Motor neuron (in vitro differentiated cells): ENCODE measurements at regions of chr16 and their contacts with region 1.

Region 1: GRCh38 chr16:58582971-58583765 is 46.5 kb downstream of the CNOT1 start:
- ATAC-seq: no peak
- H3K4me3 ChIP-seq: no peak overlapping the region
- H3K27ac ChIP-seq: no peak overlapping the region
- H3K4me1 ChIP-seq: no peaks in the 10 kb centered on the region

Region 2: DNA sequence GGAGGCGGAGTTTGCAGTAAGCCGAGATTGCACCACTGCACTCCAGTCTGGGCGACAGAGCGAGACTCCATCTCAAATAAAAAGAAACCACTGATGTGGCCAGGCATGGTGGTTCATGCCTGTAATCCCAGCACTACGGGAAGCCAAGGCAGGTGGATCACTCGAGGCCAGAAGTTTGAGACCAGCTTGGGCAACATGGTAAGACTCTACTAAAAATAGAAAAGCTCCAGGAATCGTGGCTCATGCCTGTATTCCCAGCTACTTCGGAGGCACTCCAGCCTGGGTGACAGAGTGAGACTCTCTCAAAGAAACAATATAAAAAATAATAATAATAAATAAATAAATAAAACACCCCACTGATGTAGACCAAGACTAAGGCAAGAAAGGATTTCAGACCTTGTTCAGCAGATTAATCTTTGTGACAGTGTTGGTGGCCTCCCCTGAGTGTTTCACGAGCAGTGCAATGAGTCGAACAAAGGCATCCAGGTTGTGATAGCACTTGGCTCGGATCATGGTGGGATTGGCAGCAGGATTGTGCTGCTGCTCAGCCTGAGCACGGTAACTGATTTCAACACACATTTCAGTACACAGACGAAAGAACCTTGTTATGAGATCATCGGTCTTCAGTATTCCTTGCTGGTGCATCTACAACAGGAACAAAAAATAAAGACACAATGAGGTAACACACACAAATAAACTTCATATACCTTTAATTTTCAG is 49.3 kb before region 1 on chr16:
- in situ Hi-C with region 1: loop called in 1 of 9 experiments (anchors 10 kb)
- ATAC-seq: no peak
- H3K4me3 ChIP-seq: no peak overlapping the region
- H3K27ac ChIP-seq: no peak overlapping the region
- H3K4me1 ChIP-seq: no peaks in the 10 kb centered on the region

Region 3: GRCh38 chr16:58814348-58814801 is 231.2 kb after region 1 on chr16:
- in situ Hi-C with region 1: no loop called
- ATAC-seq: peak; percentile 78 to 91 (median 86)
- H3K4me3 ChIP-seq: peak overlapping the region; percentile 12 to 31 (median 26)
- H3K27ac ChIP-seq: peak overlapping the region in 1 of 2 donors; percentile 66
- H3K4me1 ChIP-seq: peaks cover 6 to 12% of the 10 kb centered on the region in 2 donors